ENCODE measurements at regions of chr3 and their contacts with region 1.

Region 1: DNA sequence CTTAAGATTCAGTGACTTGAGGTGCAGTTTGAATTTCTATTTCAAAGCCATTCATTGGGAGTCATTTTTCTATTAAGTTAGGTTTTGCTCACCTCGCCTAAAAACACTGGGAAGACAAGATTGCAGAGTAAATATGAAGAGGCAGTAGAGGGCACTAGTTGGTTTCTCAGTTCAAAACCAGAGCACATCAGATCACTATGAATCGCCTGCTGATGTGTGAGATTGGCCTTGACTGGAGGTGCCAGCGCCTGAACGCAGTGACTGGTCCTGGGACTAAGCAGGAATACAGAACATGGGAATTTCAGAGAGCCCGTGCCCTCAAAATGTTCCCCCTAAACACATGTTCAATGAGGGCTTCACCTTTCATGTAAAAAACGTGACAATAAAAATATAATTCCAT is 229.0 kb downstream of the ITPR1 start:
- DNase-seq: peak; percentile 88 to 89
- ATAC-seq: peak; percentile 86 to 93
- H3K4me3 ChIP-seq: no peak overlapping the region
- H3K27ac ChIP-seq: peak overlapping the region; percentile 65 to 79
- H3K4me1 ChIP-seq: peaks cover 42% of the 10 kb centered on the region
- CTCF ChIP-seq: peak; percentile 77
- EP300 ChIP-seq: no peak
- POLR2A ChIP-seq: no peak
- RAD21 ChIP-seq: peak; percentile 93

Region 2: DNA sequence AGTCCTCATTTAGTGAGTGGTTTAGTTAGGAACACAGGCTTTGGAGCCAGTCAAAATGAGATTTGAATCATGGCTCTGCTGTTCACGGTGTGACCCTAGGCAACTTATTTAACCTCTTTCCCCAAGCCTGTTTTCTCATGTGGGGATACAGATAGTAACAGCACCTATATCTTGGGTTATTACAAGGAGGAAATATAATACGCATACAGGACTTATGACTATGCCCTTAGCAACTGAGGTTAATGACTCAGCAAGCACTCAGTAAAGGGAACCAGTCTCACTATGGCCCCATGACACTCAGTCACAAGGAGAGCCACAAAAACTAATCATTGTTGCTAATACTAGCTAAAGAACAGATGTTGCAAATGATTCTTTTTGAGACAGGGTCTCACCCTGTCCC is 301.0 kb before region 1 on chr3:
- CTCF ChIA-PET with region 1: no interaction called
- POLR2A ChIA-PET with region 1: no interaction called
- DNase-seq: peak; percentile 19 to 20
- ATAC-seq: peak; percentile 27 to 49; a peak in 2 of 6 replicates
- H3K4me3 ChIP-seq: no peak overlapping the region
- H3K27ac ChIP-seq: peak overlapping the region in 1 of 2 experiments; percentile 35; a peak in 2 of 6 replicates
- H3K4me1 ChIP-seq: peaks cover 21% of the 10 kb centered on the region
- CTCF ChIP-seq: no peak
- EP300 ChIP-seq: no peak
- POLR2A ChIP-seq: no peak
- RAD21 ChIP-seq: no peak

Region 3: DNA sequence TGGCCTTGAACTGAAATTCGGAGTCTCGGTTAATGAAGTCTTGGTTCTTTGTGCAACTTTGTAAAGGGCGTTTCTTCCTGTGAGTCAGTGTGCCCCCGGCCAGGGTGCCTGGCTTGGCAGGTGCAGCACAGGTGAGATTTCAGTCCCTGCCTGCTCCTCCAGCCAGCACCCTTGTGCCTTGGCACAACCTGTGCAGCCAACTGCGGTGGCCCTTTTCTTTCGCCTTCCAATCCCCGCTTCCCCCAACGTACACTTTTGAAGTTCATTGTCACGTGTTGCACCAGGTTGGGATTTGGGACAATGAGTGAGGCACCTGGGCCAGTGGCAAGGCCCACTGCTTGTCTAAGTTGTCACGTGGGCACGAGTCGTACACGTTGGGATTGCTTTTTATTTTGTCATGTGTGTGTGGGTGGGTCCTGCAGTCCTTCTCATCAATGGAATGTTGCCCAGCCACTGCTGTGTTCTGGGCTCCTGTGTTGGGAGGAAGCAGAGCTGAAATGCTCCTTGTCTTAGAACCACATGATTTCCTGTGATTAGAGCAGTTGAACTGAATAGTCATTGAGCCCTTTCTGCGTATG is 14.3 kb after region 1 on chr3:
- CTCF ChIA-PET with region 1: interaction called, 20 read pairs
- POLR2A ChIA-PET with region 1: no interaction called
- DNase-seq: no peak
- ATAC-seq: no peak
- H3K4me3 ChIP-seq: no peak overlapping the region
- H3K27ac ChIP-seq: no peak overlapping the region
- H3K4me1 ChIP-seq: peaks cover 32% of the 10 kb centered on the region
- CTCF ChIP-seq: no peak
- EP300 ChIP-seq: no peak
- POLR2A ChIP-seq: no peak
- RAD21 ChIP-seq: no peak

Region 4: GRCh38 chr3:4986782-4987537 is 264.9 kb after region 1 on chr3:
- CTCF ChIA-PET with region 1: interaction called, 602 read pairs
- POLR2A ChIA-PET with region 1: interaction called, 11 read pairs
- DNase-seq: peak; percentile 91 to 100
- ATAC-seq: peak; percentile 73 to 83
- H3K4me3 ChIP-seq: 0 out of 3 replicates have a peak overlapping the region, but pooled peaks have one; percentile 16
- H3K27ac ChIP-seq: peak overlapping the region; percentile 96 to 98
- H3K4me1 ChIP-seq: peaks cover 60% of the 10 kb centered on the region
- CTCF ChIP-seq: no peak; the same call in 2 of the 3 replicates
- EP300 ChIP-seq: peak; percentile 99 to 100
- POLR2A ChIP-seq: peak; percentile 18; the same call in 1 of the 2 replicates
- RAD21 ChIP-seq: peak; percentile 37 to 76

Region 5: DNA sequence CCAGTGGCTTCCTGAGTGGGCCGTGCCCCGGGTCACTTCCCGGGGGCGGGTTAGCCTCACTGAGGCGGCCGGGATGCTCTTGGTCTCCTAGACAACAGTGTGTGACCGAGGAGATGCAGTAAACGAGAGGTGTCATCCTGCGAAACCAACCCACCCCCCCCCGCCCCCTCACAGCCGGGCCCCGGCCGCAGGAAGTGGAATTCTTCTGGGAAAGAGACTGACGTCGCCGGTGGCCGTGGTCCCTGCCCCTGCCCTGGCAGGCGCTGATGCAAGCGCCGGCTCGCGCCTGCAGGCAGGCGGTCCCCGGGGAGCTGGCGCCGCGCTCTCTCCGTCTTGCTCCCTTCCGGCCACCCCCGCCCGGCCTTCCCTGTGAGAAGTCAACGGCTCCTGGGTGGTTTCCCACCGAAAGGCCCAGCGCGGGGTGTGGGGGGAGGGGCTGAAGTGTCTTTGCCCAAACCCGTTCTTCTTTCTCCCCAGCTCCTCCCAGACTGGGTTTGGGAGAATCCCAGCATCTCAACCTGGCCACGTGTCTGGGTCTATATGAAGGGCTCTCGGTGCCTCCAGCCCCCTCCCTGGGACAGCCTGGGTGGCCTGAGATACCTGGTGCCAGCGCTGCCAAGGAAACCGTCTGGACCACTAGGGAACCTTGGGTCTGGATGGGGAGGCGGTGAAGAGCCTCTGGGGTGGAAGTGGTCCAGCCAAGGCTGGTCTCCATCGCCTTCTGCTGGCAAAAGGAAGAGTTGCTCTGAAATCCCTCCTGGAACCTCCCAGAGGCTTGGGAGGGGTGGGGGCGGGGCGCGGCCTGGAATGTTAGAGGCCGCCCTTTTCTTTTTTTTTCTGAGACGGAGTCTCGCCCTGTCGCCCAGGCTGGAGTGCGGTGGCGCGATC is 304.5 kb after region 1 on chr3:
- CTCF ChIA-PET with region 1: interaction called, 53 read pairs
- POLR2A ChIA-PET with region 1: interaction called, 6 read pairs
- DNase-seq: peak; percentile 79 to 98
- ATAC-seq: peak; percentile 85 to 87
- H3K4me3 ChIP-seq: peak overlapping the region; percentile 27
- H3K27ac ChIP-seq: peak overlapping the region; percentile 94 to 98
- H3K4me1 ChIP-seq: peaks cover 49% of the 10 kb centered on the region
- CTCF ChIP-seq: peak; percentile 70
- EP300 ChIP-seq: peak; percentile 96 to 99; a peak in 4 of 5 replicates
- POLR2A ChIP-seq: no peak
- RAD21 ChIP-seq: peak; percentile 93 to 95

Region 6: GRCh38 chr3:5057857-5058324 is 335.8 kb after region 1 on chr3:
- CTCF ChIA-PET with region 1: interaction called, 50 read pairs
- POLR2A ChIA-PET with region 1: interaction called, 3 read pairs
- DNase-seq: peak; percentile 62 to 91
- ATAC-seq: peak; percentile 96
- H3K4me3 ChIP-seq: no peak overlapping the region
- H3K27ac ChIP-seq: peak overlapping the region; percentile 9 to 73; a peak in 4 of 6 replicates
- H3K4me1 ChIP-seq: peaks cover 16% of the 10 kb centered on the region; the same call in 2 of the 3 replicates
- CTCF ChIP-seq: peak; percentile 92
- EP300 ChIP-seq: no peak
- POLR2A ChIP-seq: no peak
- RAD21 ChIP-seq: peak; percentile 95 to 97